Pancreas (tissue), 10 donors: ENCODE measurements at regions of chr4 and their contacts with region 1.

Region 1: GRCh38 chr4:171203425-171203824 is 609.8 kb upstream of the GALNTL6 start:
- DNase-seq: peak in 2 of 6 donors; percentile 10 to 12
- ATAC-seq: peak; percentile 41 to 80 (median 66)
- H3K4me3 ChIP-seq: no peak overlapping the region
- H3K27ac ChIP-seq: peak overlapping the region in 3 of 4 donors; percentile 20 to 45 (median 42)
- H3K4me1 ChIP-seq: no peaks in the 10 kb centered on the region
- H3K27me3 ChIP-seq: no peaks in the 10 kb centered on the region
- CTCF ChIP-seq: no peak

Region 2: DNA sequence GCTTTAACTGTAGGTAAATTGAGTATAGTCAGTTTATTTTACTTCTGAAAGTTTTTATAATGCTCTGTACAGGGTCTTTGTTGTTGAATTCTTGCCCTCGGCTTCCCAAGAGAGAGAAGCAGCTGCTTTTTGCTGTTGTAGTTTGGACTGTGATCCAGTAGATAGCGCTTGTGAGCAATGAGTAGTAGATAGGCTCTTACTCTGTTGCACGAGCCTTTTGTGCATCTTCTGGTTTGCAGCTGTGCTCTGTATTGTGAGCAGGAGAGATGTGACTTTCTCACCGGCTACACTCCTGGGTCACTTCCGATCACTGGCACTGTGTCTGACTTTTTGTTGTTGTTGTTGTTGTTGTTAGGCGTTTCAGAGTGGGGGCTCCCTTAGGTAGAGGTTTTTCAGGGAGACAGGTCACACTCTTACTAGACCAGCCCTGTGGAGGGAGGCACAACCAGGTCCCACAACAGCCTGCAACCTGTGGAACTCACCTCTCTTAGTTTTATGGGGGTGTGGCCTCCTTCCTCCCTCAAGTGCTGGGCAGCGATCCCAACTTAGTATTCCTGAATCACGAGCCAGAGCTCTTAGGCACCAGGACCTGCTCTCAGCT is 212.3 kb before region 1 on chr4:
- intact Hi-C with region 1: loop called in 1 of 3 experiments (anchors 10 kb)
- DNase-seq: peak in 2 of 6 donors; percentile 18 to 46
- ATAC-seq: peak; percentile 73 to 93 (median 84)
- H3K4me3 ChIP-seq: no peak overlapping the region
- H3K27ac ChIP-seq: no peak overlapping the region
- H3K4me1 ChIP-seq: no peaks in the 10 kb centered on the region
- H3K27me3 ChIP-seq: no peaks in the 10 kb centered on the region
- CTCF ChIP-seq: peak in 3 of 4 donors; percentile 45 to 56 (median 54)